B cell (primary cell): ENCODE measurements at regions of chr3 and their contacts with region 1.

Region 1: GRCh38 chr3:105836533-105836932 is 32.3 kb downstream of the CBLB start:
- DNase-seq: no peak
- ATAC-seq: no peak
- H3K4me3 ChIP-seq: peak overlapping the region in 4 of 5 experiments; percentile 10 to 61 (median 29)
- H3K4me3 Mint-ChIP-seq: peak overlapping the region; percentile 83
- H3K27ac ChIP-seq: peak overlapping the region in 1 of 2 donors; percentile 39
- H3K27ac Mint-ChIP-seq: peak overlapping the region; percentile 48
- H3K4me1 ChIP-seq: peaks cover 22 to 46% of the 10 kb centered on the region in 2 donors
- H3K4me1 Mint-ChIP-seq: peaks cover 57% of the 10 kb centered on the region
- H3K27me3 ChIP-seq: no peaks in the 10 kb centered on the region
- H3K27me3 Mint-ChIP-seq: no peaks in the 10 kb centered on the region
- CTCF ChIP-seq: no peak

Region 2: DNA sequence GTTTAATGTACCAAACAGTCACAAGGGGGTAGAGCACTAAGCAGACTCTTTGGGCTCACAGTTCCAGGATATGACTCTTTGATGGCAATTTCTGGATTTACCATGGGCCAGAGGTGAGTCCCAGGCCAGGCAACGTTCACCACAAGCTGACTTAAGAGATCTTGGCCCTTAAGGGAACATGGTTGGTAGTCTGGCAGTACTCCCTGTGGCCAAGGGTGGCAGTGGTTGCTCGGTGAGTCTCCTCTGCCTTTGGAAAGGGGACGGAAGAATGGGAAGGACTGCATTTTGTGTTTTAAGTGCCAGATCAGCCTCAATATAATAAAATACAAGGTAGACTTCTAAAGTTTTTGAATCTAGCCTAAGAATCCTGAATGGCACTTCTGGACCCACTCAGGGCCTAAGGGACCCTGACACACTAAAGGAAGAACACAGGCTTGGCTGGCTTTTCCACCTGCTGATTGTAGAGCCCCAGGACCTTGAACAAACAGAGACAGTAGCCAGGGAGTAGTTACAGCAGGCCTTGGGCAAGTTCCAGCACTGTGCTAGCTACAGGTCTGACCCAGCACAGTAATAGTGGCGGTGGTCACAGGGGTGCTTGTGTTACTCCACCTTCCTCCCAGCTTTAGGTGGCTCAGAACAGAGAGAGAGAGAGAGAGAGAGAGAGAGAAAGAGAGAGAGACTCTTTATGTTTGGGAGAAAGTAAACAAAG is 1200.5 kb before region 1 on chr3:
- CTCF ChIA-PET with region 1: no interaction called
- POLR2A ChIA-PET with region 1: no interaction called
- intact Hi-C with region 1: no loop called
- DNase-seq: no peak
- ATAC-seq: no peak
- H3K4me3 ChIP-seq: no peak overlapping the region
- H3K4me3 Mint-ChIP-seq: no peak overlapping the region
- H3K27ac ChIP-seq: no peak overlapping the region
- H3K27ac Mint-ChIP-seq: no peak overlapping the region
- H3K4me1 ChIP-seq: no peaks in the 10 kb centered on the region
- H3K4me1 Mint-ChIP-seq: peaks cover 2% of the 10 kb centered on the region
- H3K27me3 ChIP-seq: no peaks in the 10 kb centered on the region
- H3K27me3 Mint-ChIP-seq: no peaks in the 10 kb centered on the region
- CTCF ChIP-seq: no peak

Region 3: GRCh38 chr3:105647047-105647446 is 189.5 kb before region 1 on chr3:
- CTCF ChIA-PET with region 1: no interaction called
- POLR2A ChIA-PET with region 1: no interaction called
- intact Hi-C with region 1: no loop called
- DNase-seq: no peak
- ATAC-seq: no peak
- H3K4me3 ChIP-seq: no peak overlapping the region
- H3K4me3 Mint-ChIP-seq: no peak overlapping the region
- H3K27ac ChIP-seq: no peak overlapping the region
- H3K27ac Mint-ChIP-seq: no peak overlapping the region
- H3K4me1 ChIP-seq: no peaks in the 10 kb centered on the region
- H3K4me1 Mint-ChIP-seq: peaks cover 4% of the 10 kb centered on the region
- H3K27me3 ChIP-seq: no peaks in the 10 kb centered on the region
- H3K27me3 Mint-ChIP-seq: no peaks in the 10 kb centered on the region
- CTCF ChIP-seq: no peak

Region 4: DNA sequence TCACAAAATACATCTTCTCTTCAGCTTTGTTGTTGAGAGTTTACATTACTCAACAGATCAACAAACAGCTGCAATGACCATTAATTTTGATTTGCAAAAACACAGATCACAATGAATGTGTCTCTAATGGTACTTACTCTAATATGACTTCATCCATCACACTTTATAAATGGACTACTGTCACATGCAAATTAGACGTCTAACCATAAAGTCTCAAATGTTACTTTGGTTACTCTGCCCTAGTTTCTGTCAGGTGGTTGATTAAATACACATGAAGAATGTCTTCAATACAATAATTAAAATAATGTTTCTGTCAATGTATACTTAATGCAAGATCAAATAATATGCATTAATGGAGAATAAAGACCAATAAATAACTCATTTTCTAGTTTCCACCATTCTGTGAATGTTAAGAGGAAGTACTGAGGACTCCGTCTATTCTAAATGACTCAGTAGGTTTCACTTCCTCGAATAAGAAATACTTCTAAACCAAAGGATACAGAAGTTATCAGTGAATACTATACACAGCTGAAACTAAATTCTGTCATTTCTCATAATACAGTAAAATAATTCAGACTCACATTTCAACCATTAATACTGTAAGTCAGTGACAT is 113.5 kb before region 1 on chr3:
- CTCF ChIA-PET with region 1: no interaction called
- POLR2A ChIA-PET with region 1: no interaction called
- intact Hi-C with region 1: loop called (anchors 2 kb)
- DNase-seq: peak; percentile 77
- ATAC-seq: peak; percentile 96
- H3K4me3 ChIP-seq: peak overlapping the region in 1 of 5 experiments; percentile 29
- H3K4me3 Mint-ChIP-seq: peak overlapping the region; percentile 26
- H3K27ac ChIP-seq: peak overlapping the region in 1 of 2 donors; percentile 35
- H3K27ac Mint-ChIP-seq: peak overlapping the region; percentile 51
- H3K4me1 ChIP-seq: peaks cover 4 to 15% of the 10 kb centered on the region in 2 donors
- H3K4me1 Mint-ChIP-seq: peaks cover 18% of the 10 kb centered on the region
- H3K27me3 ChIP-seq: no peaks in the 10 kb centered on the region
- H3K27me3 Mint-ChIP-seq: no peaks in the 10 kb centered on the region
- CTCF ChIP-seq: no peak

Region 5: GRCh38 chr3:105798381-105798934 is 38.1 kb before region 1 on chr3:
- CTCF ChIA-PET with region 1: interaction called, 3 read pairs
- POLR2A ChIA-PET with region 1: interaction called, 4 read pairs
- intact Hi-C with region 1: loop called (anchors 2 kb)
- DNase-seq: peak; percentile 71
- ATAC-seq: peak; percentile 86
- H3K4me3 ChIP-seq: peak overlapping the region in 1 of 5 experiments; percentile 28
- H3K4me3 Mint-ChIP-seq: peak overlapping the region; percentile 66
- H3K27ac ChIP-seq: peak overlapping the region in 1 of 2 donors; percentile 53
- H3K27ac Mint-ChIP-seq: peak overlapping the region; percentile 70
- H3K4me1 ChIP-seq: peaks cover 37 to 61% of the 10 kb centered on the region in 2 donors
- H3K4me1 Mint-ChIP-seq: peaks cover 66% of the 10 kb centered on the region
- H3K27me3 ChIP-seq: no peaks in the 10 kb centered on the region
- H3K27me3 Mint-ChIP-seq: no peaks in the 10 kb centered on the region
- CTCF ChIP-seq: no peak

Region 6: GRCh38 chr3:105823149-105823869 is 13.2 kb before region 1 on chr3:
- CTCF ChIA-PET with region 1: no interaction called
- POLR2A ChIA-PET with region 1: interaction called, 6 read pairs
- intact Hi-C with region 1: loop called (anchors 2 kb)
- DNase-seq: no peak
- ATAC-seq: peak; percentile 49
- H3K4me3 ChIP-seq: no peak overlapping the region
- H3K4me3 Mint-ChIP-seq: peak overlapping the region; percentile 48
- H3K27ac ChIP-seq: no peak overlapping the region
- H3K27ac Mint-ChIP-seq: peak overlapping the region; percentile 59
- H3K4me1 ChIP-seq: peaks cover 27 to 32% of the 10 kb centered on the region in 2 donors
- H3K4me1 Mint-ChIP-seq: peaks cover 60% of the 10 kb centered on the region
- H3K27me3 ChIP-seq: no peaks in the 10 kb centered on the region
- H3K27me3 Mint-ChIP-seq: no peaks in the 10 kb centered on the region
- CTCF ChIP-seq: no peak

Region 7: DNA sequence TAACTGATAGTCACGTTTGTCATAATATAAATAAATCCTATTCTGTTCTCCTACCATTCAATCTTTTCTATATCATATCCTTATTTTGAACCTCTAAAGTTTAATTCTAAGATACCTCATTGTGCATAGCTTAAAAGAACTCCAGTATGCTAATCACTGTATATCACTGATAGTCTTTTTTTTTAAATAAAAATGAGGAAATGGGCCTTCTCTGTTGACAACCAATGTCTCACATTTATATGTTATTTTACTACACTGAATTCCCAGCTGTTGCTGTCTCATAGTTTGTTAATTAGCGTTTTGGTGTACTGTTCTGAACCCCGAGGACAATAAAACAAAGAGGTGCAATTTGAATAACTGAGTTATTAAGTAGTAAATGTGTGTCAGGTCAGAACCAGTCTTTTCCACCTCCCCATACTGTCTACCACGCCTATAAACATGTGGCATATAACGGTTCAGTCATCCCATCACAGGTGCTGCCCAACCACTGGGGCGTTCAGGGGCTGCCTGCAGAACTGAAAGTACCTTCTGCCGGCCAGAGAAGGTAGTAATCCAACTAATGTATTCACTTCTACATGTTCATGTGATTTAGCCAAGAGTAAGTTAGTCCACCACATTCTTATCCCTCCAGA is 17.4 kb after region 1 on chr3:
- CTCF ChIA-PET with region 1: interaction called, 17 read pairs
- POLR2A ChIA-PET with region 1: interaction called, 3 read pairs
- intact Hi-C with region 1: loop called (anchors 2 kb)
- DNase-seq: peak; percentile 91
- ATAC-seq: peak; percentile 99
- H3K4me3 ChIP-seq: peak overlapping the region in 1 of 5 experiments; percentile 5
- H3K4me3 Mint-ChIP-seq: peak overlapping the region; percentile 74
- H3K27ac ChIP-seq: peak overlapping the region; percentile 94 to 95
- H3K27ac Mint-ChIP-seq: peak overlapping the region; percentile 97
- H3K4me1 ChIP-seq: peaks cover 43 to 49% of the 10 kb centered on the region in 2 donors
- H3K4me1 Mint-ChIP-seq: peaks cover 53% of the 10 kb centered on the region
- H3K27me3 ChIP-seq: no peaks in the 10 kb centered on the region
- H3K27me3 Mint-ChIP-seq: no peaks in the 10 kb centered on the region
- CTCF ChIP-seq: peak; percentile 20

Region 8: GRCh38 chr3:105862217-105862616 is 25.7 kb after region 1 on chr3:
- CTCF ChIA-PET with region 1: interaction called, 7 read pairs
- POLR2A ChIA-PET with region 1: no interaction called
- intact Hi-C with region 1: loop called (anchors 2 kb)
- DNase-seq: peak; percentile 88
- ATAC-seq: peak; percentile 90
- H3K4me3 ChIP-seq: peak overlapping the region in 2 of 5 experiments; percentile 5 to 34
- H3K4me3 Mint-ChIP-seq: no peak overlapping the region
- H3K27ac ChIP-seq: peak overlapping the region; percentile 40 to 49
- H3K27ac Mint-ChIP-seq: no peak overlapping the region
- H3K4me1 ChIP-seq: peaks cover 34 to 56% of the 10 kb centered on the region in 2 donors
- H3K4me1 Mint-ChIP-seq: peaks cover 48% of the 10 kb centered on the region
- H3K27me3 ChIP-seq: no peaks in the 10 kb centered on the region
- H3K27me3 Mint-ChIP-seq: no peaks in the 10 kb centered on the region
- CTCF ChIP-seq: no peak